B cell (primary cell): ENCODE measurements at regions of chr19 and their contacts with region 1.

Region 1: GRCh38 chr19:12847159-12848139 is 9.1 kb downstream of the MAST1 start:
- DNase-seq: peak; percentile 87
- ATAC-seq: peak; percentile 99
- H3K4me3 ChIP-seq: peak overlapping the region in 4 of 5 experiments; percentile 18 to 35 (median 22)
- H3K4me3 Mint-ChIP-seq: peak overlapping the region; percentile 55
- H3K27ac ChIP-seq: no peak overlapping the region
- H3K27ac Mint-ChIP-seq: no peak overlapping the region
- H3K4me1 ChIP-seq: peaks cover 10% of the 10 kb centered on the region in 2 donors
- H3K4me1 Mint-ChIP-seq: peaks cover 6% of the 10 kb centered on the region
- H3K27me3 ChIP-seq: peaks cover 0 to 46% (median 12%) of the 10 kb centered on the region in 4 experiments
- H3K27me3 Mint-ChIP-seq: peaks cover 30% of the 10 kb centered on the region
- CTCF ChIP-seq: peak; percentile 100

Region 2: DNA sequence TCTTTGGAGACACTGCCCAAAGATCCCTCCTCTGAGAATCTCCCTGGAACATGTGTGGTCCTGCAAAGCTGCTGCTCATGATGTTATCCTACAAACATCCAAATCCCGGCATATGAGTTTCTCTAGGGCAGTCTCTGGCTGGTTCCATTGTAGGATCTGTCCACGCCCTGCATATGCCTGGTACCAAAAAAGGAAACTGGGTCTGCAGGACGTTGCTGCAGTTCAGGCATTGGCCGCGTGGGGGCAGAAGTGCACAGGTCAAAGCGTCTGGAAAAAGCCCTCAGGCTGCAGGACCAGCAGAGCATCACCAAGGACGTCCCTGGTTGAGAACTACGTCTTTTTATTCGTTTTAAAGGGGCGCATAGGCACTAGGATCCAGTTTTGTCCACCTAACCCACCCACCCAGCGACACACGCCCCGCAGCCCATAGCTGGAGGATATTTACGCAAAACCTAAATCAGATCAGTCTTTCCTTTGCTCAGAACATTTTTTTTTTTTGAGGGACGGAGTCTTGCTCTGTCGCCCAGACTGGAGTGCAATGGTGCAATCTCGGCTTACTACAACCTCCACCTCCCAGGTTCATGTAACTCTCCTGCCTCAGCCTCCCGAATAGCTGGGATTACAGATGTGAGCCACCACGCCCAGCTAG is 283.3 kb before region 1 on chr19:
- CTCF ChIA-PET with region 1: interaction called, 13 read pairs
- POLR2A ChIA-PET with region 1: no interaction called
- intact Hi-C with region 1: loop called (anchors 1 kb)
- DNase-seq: peak; percentile 91
- ATAC-seq: peak; percentile 100
- H3K4me3 ChIP-seq: no peak overlapping the region
- H3K4me3 Mint-ChIP-seq: peak overlapping the region; percentile 27
- H3K27ac ChIP-seq: no peak overlapping the region
- H3K27ac Mint-ChIP-seq: peak overlapping the region; percentile 46
- H3K4me1 ChIP-seq: peaks cover 0 to 7% of the 10 kb centered on the region in 2 donors
- H3K4me1 Mint-ChIP-seq: peaks cover 6% of the 10 kb centered on the region
- H3K27me3 ChIP-seq: no peaks in the 10 kb centered on the region
- H3K27me3 Mint-ChIP-seq: no peaks in the 10 kb centered on the region
- CTCF ChIP-seq: peak; percentile 96

Region 3: DNA sequence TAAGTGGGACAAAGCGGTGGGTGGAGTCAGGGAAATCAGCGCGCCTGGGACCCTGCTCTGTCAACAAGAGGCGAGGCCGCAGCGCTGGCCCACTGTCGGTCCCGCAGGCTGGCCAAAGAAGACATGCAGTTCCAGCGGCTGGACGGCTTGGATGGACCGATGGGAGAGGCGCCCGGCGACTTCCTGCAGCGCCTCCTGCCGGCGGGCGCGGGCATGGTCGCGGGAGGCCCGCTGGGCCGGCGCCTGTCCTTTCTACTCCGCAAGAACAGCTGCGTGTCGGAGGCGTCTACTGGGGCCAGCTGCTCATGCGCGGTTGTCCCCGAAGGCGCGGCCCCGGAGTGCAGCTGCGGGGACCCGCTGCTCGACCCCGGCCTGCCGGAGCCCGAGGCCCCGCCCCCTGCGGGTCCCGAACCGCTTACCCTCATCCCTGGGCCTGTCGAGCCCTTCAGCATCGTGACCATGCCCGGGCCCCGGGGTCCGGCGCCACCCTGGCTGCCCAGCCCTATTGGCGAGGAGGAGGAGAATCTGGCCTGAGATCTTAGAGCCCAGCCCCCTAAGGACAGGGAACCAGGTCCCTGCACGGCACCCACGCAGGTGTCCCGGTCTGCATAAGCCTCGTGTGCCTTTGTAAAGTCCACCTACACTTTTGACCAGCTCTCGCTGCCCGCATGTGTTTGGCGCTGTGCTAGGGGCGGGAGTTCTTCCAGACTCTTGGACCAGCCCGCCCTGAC is 89.7 kb before region 1 on chr19:
- CTCF ChIA-PET with region 1: interaction called, 353 read pairs
- POLR2A ChIA-PET with region 1: interaction called, 8 read pairs
- intact Hi-C with region 1: loop called (anchors 1 kb)
- DNase-seq: peak; percentile 75
- ATAC-seq: peak; percentile 72
- H3K4me3 ChIP-seq: peak overlapping the region in 3 of 5 experiments; percentile 27 to 42 (median 37)
- H3K4me3 Mint-ChIP-seq: peak overlapping the region; percentile 52
- H3K27ac ChIP-seq: no peak overlapping the region
- H3K27ac Mint-ChIP-seq: no peak overlapping the region
- H3K4me1 ChIP-seq: peaks cover 7 to 8% of the 10 kb centered on the region in 2 donors
- H3K4me1 Mint-ChIP-seq: peaks cover 11% of the 10 kb centered on the region
- H3K27me3 ChIP-seq: peaks cover 0 to 28% (median 5%) of the 10 kb centered on the region in 4 experiments
- H3K27me3 Mint-ChIP-seq: peaks cover 23% of the 10 kb centered on the region
- CTCF ChIP-seq: peak; percentile 88

Region 4: DNA sequence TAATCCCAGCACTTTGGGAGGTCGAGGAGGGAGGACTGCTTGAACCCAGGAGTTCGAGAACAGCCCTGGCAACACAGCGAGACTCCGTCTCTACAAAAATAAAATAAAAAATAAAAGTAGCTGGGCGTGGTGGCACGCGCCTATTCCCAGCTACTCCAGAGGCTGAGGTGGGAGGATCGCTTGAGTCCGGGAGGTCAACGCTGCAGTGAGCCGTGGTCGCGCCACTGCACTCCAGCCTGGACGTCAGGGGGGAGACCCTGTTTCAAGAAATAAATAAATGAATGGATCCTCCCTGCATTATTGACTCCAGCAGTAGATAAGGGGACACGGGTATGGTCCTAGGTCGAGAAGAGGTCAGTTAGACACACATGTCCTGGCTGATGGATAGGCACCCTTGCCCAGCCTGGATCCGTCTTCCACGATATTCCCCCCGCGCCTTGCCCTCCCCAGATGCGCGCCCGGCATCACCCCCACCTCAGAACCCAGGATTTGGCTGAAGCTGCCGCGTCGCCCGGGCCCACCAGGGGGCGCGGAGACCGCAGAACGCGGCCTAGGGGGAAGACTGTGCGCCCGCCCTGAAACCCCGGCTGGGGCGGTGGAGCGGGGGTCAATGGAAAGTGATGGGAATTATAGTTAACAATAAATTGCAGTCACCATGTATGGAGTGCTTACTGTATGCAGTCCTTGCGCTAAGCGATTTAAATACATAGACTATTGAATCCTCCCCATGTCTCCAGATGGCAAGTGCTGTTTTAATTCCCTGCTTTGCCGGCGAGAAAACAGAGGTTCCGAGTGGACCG is 70.0 kb before region 1 on chr19:
- CTCF ChIA-PET with region 1: interaction called, 36 read pairs
- POLR2A ChIA-PET with region 1: no interaction called
- intact Hi-C with region 1: no loop called
- DNase-seq: peak; percentile 90
- ATAC-seq: peak; percentile 29
- H3K4me3 ChIP-seq: peak overlapping the region; percentile 63 to 89 (median 75)
- H3K4me3 Mint-ChIP-seq: peak overlapping the region; percentile 88
- H3K27ac ChIP-seq: peak overlapping the region; percentile 83 to 86
- H3K27ac Mint-ChIP-seq: peak overlapping the region; percentile 84
- H3K4me1 ChIP-seq: peaks cover 27 to 47% of the 10 kb centered on the region in 2 donors
- H3K4me1 Mint-ChIP-seq: peaks cover 48% of the 10 kb centered on the region
- H3K27me3 ChIP-seq: no peaks in the 10 kb centered on the region
- H3K27me3 Mint-ChIP-seq: no peaks in the 10 kb centered on the region
- CTCF ChIP-seq: peak; percentile 99

Region 5: DNA sequence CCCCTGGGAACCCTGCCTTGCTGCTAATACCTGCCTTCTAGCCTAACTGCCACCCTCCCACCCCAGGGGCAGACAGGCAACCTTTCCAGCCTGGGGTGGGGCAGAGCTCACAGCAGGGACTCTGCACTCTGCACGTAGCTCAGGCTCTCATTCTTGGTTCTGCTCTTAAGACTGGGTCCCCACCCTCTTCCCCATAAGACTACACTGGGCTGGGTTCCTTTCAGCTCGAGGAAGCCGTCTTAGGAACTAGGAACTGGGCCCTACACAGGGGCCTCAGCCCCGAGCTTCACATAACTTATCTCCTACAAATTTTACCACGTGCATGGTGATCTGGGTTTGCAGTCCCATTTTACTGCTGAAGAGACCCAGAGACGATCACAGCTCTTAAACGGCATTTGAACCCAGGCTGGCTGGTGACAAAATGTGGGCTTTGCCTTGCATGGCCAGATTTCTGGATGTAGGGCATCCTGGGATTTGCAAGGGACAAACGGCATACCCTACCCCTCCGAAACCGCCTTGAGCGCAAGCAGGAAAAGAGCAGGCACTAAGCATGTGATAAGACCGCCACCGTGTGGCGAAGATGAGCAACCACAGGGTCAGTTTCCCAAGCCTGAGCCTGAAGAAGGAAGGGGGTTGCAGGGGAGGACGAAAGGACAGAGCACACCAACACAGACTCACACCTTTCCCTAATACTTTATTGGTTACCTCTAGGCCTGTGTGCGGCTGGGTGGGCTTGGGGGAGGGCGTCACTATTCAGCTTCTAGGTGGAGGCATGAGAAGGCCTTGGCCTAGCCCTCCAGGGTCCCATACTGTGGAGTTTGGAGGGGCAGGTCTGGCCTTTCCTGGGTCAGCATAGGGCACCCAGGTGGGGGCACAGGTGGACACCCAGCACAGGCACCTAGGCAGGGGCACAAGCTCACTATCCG is 51.0 kb before region 1 on chr19:
- CTCF ChIA-PET with region 1: interaction called, 20 read pairs
- POLR2A ChIA-PET with region 1: no interaction called
- intact Hi-C with region 1: loop called (anchors 2 kb)
- DNase-seq: peak; percentile 89
- ATAC-seq: no peak
- H3K4me3 ChIP-seq: peak overlapping the region in 4 of 5 experiments; percentile 14 to 52 (median 34)
- H3K4me3 Mint-ChIP-seq: peak overlapping the region; percentile 87
- H3K27ac ChIP-seq: peak overlapping the region; percentile 3 to 57
- H3K27ac Mint-ChIP-seq: peak overlapping the region; percentile 88
- H3K4me1 ChIP-seq: peaks cover 32 to 39% of the 10 kb centered on the region in 2 donors
- H3K4me1 Mint-ChIP-seq: peaks cover 28% of the 10 kb centered on the region
- H3K27me3 ChIP-seq: no peaks in the 10 kb centered on the region
- H3K27me3 Mint-ChIP-seq: no peaks in the 10 kb centered on the region
- CTCF ChIP-seq: peak; percentile 96

Region 6: DNA sequence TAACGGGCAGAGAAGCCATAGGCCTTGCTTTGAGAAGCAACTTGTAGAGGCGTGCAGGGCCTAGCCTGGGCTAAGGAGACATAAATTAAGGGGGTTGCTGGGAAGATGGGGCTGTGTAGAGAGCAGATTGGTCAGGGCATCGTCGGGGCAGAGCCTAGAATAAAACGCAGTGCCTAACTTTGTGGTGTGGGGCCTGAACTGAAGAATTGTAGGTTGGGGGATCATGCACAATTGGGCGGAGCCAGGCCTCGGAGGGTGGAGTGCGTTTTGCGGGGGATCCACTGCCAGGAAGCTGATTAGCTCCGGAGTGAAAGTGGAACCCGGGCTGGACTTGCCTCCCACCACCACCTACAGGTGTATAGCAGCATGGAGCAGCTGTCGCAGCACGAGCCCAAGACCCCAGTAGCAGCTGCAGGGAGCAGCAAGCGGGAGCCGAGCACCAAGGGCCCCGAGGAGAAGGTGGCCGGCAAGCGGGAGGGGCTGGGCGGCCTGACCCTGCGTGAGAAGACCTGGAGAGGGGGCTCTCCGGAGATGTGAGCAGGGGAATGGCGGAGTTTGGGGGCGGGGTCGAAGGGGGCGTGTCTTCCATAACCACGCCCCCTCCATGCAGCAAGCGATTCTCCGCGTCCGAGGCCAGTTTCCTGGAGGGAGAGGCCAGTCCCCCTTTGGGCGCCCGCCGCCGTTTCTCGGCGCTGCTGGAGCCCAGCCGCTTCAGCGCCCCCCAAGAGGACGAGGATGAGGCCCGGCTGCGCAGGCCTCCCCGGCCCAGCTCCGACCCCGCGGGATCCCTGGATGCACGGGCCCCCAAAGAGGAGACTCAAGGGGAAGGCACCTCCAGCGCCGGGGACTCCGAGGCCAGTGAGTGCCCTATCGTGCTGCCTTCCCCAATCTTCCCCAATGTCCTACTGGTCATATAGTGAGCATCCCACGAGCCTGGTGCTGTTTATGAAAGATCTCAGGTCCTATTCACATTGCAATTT is 20.0 kb after region 1 on chr19:
- CTCF ChIA-PET with region 1: interaction called, 16 read pairs
- POLR2A ChIA-PET with region 1: no interaction called
- intact Hi-C with region 1: no loop called
- DNase-seq: peak; percentile 91
- ATAC-seq: peak; percentile 89
- H3K4me3 ChIP-seq: peak overlapping the region; percentile 21 to 70 (median 63)
- H3K4me3 Mint-ChIP-seq: peak overlapping the region; percentile 91
- H3K27ac ChIP-seq: peak overlapping the region in 1 of 2 donors; percentile 20
- H3K27ac Mint-ChIP-seq: peak overlapping the region; percentile 77
- H3K4me1 ChIP-seq: peaks cover 0 to 11% of the 10 kb centered on the region in 2 donors
- H3K4me1 Mint-ChIP-seq: peaks cover 8% of the 10 kb centered on the region
- H3K27me3 ChIP-seq: peaks cover 0 to 2% (median 0%) of the 10 kb centered on the region in 4 experiments
- H3K27me3 Mint-ChIP-seq: peaks cover 6% of the 10 kb centered on the region
- CTCF ChIP-seq: no peak

Region 7: GRCh38 chr19:12956446-12957388 is 109.3 kb after region 1 on chr19 and contains the start of gene GADD45GIP1:
- CTCF ChIA-PET with region 1: no interaction called
- POLR2A ChIA-PET with region 1: no interaction called
- intact Hi-C with region 1: no loop called
- DNase-seq: peak; percentile 86
- ATAC-seq: peak; percentile 98
- H3K4me3 ChIP-seq: peak within 1 kb of the TSS; percentile 60 to 83 (median 65)
- H3K4me3 Mint-ChIP-seq: peak within 1 kb of the TSS; percentile 91
- H3K27ac ChIP-seq: peak within 1 kb of the TSS; percentile 75 to 90
- H3K27ac Mint-ChIP-seq: peak within 1 kb of the TSS; percentile 95
- H3K4me1 ChIP-seq: peaks cover 21 to 36% of the 10 kb centered on the region in 2 donors
- H3K4me1 Mint-ChIP-seq: peaks cover 30% of the 10 kb centered on the region
- H3K27me3 ChIP-seq: no peaks in the 10 kb centered on the region
- H3K27me3 Mint-ChIP-seq: peaks cover 2% of the 10 kb centered on the region
- CTCF ChIP-seq: no peak
- total RNA-seq, gene GADD45GIP1: 11.7 and 12.6 TPM in 2 replicates